Endothelial cell of umbilical vein (primary cell): ENCODE measurements at regions of chr5 and their contacts with region 1.

Region 1: GRCh38 chr5:15499528-15500324 is at the start of gene FBXL7:
- DNase-seq: peak; percentile 81
- H3K4me3 ChIP-seq: peak within 1 kb of the TSS; percentile 83 to 98 (median 88)
- H3K27ac ChIP-seq: peak within 1 kb of the TSS; percentile 66
- H3K4me1 ChIP-seq: peaks cover 34% of the 10 kb centered on the region
- H3K27me3 ChIP-seq: no peaks in the 10 kb centered on the region
- CTCF ChIP-seq: peak in 1 of 2 donors; percentile 24
- POLR2A ChIP-seq: peak; percentile 88
- total RNA-seq, gene FBXL7: 28.6 and 32.2 TPM in 2 replicates

Region 2: GRCh38 chr5:15366676-15367391 is 132.9 kb before region 1 on chr5:
- CTCF ChIA-PET with region 1: no interaction called
- POLR2A ChIA-PET with region 1: no interaction called
- dilution Hi-C with region 1: no loop called
- intact Hi-C with region 1: loop called (anchors 2 kb)
- DNase-seq: peak; percentile 91
- H3K4me3 ChIP-seq: no peak overlapping the region
- H3K27ac ChIP-seq: peak overlapping the region; percentile 83
- H3K4me1 ChIP-seq: peaks cover 43% of the 10 kb centered on the region
- H3K27me3 ChIP-seq: no peaks in the 10 kb centered on the region
- CTCF ChIP-seq: no peak
- POLR2A ChIP-seq: no peak

Region 3: GRCh38 chr5:15598294-15598902 is 98.7 kb after region 1 on chr5:
- CTCF ChIA-PET with region 1: no interaction called
- POLR2A ChIA-PET with region 1: no interaction called
- dilution Hi-C with region 1: no loop called
- intact Hi-C with region 1: loop called (anchors 5 kb)
- DNase-seq: no peak
- H3K4me3 ChIP-seq: no peak overlapping the region
- H3K27ac ChIP-seq: no peak overlapping the region
- H3K4me1 ChIP-seq: no peaks in the 10 kb centered on the region
- H3K27me3 ChIP-seq: no peaks in the 10 kb centered on the region
- CTCF ChIP-seq: peak; percentile 42 to 49
- POLR2A ChIP-seq: no peak

Region 4: GRCh38 chr5:15794052-15794985 is 294.6 kb after region 1 on chr5:
- CTCF ChIA-PET with region 1: interaction called, 4 read pairs
- POLR2A ChIA-PET with region 1: no interaction called
- dilution Hi-C with region 1: no loop called
- intact Hi-C with region 1: loop called (anchors 1 kb)
- DNase-seq: peak; percentile 74
- H3K4me3 ChIP-seq: no peak overlapping the region
- H3K27ac ChIP-seq: peak overlapping the region; percentile 41
- H3K4me1 ChIP-seq: peaks cover 30% of the 10 kb centered on the region
- H3K27me3 ChIP-seq: no peaks in the 10 kb centered on the region
- CTCF ChIP-seq: peak in 1 of 2 donors; percentile 15
- POLR2A ChIP-seq: no peak

Region 5: DNA sequence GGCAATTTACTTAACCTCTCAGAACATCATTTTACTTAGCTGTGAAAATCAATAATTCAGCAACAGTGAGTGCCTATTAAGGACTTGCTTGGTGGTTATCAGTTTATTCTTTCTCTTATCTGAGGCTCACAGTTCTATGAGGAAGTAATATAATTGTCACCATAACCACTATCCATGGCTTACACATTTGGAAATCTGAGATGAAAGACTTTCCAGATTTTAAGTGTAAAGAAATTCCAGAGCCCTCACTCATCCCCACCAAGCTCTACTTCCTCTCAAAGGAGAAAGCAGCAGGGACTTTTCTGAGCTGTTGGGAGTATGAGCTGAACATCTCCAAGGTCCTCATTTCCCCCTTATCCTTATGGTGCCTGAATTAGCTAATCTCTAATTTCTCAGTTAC is 321.8 kb after region 1 on chr5:
- CTCF ChIA-PET with region 1: interaction called, 10 read pairs
- POLR2A ChIA-PET with region 1: no interaction called
- dilution Hi-C with region 1: no loop called
- intact Hi-C with region 1: loop called (anchors 1 kb)
- DNase-seq: peak; percentile 63
- H3K4me3 ChIP-seq: no peak overlapping the region
- H3K27ac ChIP-seq: no peak overlapping the region
- H3K4me1 ChIP-seq: peaks cover 12% of the 10 kb centered on the region
- H3K27me3 ChIP-seq: no peaks in the 10 kb centered on the region
- CTCF ChIP-seq: no peak
- POLR2A ChIP-seq: no peak

Region 6: DNA sequence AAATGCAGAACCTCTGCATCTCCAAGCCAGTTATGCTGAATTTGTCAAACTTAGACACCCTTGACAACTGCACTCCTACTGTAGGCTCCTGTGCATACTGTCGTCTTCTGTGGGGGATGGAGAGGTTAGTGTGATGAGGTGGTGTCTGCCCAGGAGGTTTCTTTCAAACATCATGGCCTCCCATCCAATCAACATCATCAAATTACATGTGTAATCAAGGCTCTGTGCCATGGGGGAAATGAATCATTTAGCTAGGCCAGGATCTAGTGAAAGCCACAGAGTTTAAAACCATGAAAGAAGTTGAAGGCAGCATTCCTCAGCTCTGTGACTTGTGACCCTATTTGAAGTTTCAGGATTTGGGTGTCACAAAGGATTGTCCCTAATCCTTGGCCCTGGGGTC is 439.2 kb after region 1 on chr5:
- CTCF ChIA-PET with region 1: no interaction called
- POLR2A ChIA-PET with region 1: no interaction called
- dilution Hi-C with region 1: no loop called
- intact Hi-C with region 1: loop called (anchors 2 kb)
- DNase-seq: peak; percentile 89
- H3K4me3 ChIP-seq: no peak overlapping the region
- H3K27ac ChIP-seq: peak overlapping the region; percentile 88
- H3K4me1 ChIP-seq: peaks cover 21% of the 10 kb centered on the region
- H3K27me3 ChIP-seq: no peaks in the 10 kb centered on the region
- CTCF ChIP-seq: no peak
- POLR2A ChIP-seq: no peak